B cell (primary cell): ENCODE measurements at regions of chr16 and their contacts with region 1.

Region 1: GRCh38 chr16:55370762-55371482 is 46.9 kb downstream of the IRX6 start:
- DNase-seq: peak; percentile 31
- ATAC-seq: no peak
- H3K4me3 ChIP-seq: no peak overlapping the region
- H3K4me3 Mint-ChIP-seq: peak overlapping the region; percentile 44
- H3K27ac ChIP-seq: no peak overlapping the region
- H3K27ac Mint-ChIP-seq: no peak overlapping the region
- H3K4me1 ChIP-seq: peaks cover 3 to 4% of the 10 kb centered on the region in 2 donors
- H3K4me1 Mint-ChIP-seq: peaks cover 6% of the 10 kb centered on the region
- H3K27me3 ChIP-seq: peaks cover 0 to 15% (median 11%) of the 10 kb centered on the region in 4 experiments
- H3K27me3 Mint-ChIP-seq: peaks cover 40% of the 10 kb centered on the region
- CTCF ChIP-seq: peak; percentile 27

Region 2: GRCh38 chr16:53549970-53550690 is 1820.8 kb before region 1 on chr16:
- CTCF ChIA-PET with region 1: no interaction called
- POLR2A ChIA-PET with region 1: no interaction called
- intact Hi-C with region 1: loop called (anchors 5 kb)
- DNase-seq: peak; percentile 72
- ATAC-seq: peak; percentile 74
- H3K4me3 ChIP-seq: no peak overlapping the region
- H3K4me3 Mint-ChIP-seq: no peak overlapping the region
- H3K27ac ChIP-seq: no peak overlapping the region
- H3K27ac Mint-ChIP-seq: no peak overlapping the region
- H3K4me1 ChIP-seq: peaks cover 9 to 12% of the 10 kb centered on the region in 2 donors
- H3K4me1 Mint-ChIP-seq: peaks cover 15% of the 10 kb centered on the region
- H3K27me3 ChIP-seq: peaks cover 0 to 10% (median 2%) of the 10 kb centered on the region in 4 experiments
- H3K27me3 Mint-ChIP-seq: peaks cover 21% of the 10 kb centered on the region
- CTCF ChIP-seq: peak; percentile 78

Region 3: DNA sequence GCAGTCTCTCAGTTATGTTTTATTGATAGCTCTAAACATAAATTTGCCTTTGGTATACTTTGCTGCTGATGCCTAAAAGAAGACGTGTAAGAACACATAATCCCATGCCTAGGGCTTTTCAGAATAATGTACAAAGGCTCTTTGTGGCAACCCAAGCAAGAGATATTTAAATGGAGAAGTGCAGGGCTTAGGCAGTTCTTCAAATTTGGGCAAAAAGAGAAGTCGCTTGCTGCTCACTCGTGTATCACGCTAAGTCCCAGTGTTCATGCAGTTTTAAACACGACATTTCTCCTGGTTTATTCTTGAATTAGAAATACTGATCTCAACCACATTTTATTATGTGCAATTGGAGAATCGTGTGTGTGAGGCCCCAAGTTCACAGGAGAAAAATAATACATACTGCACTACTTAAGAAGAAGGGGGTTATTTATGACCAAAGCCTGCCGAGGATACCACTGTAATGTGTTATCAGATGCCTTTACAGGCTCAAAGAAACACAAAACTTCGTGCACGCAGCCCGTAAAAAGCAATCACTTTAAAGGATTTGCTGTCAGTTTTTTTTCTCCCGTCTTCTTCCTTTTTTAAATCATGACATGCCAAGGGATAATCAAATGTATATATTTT is 69.4 kb before region 1 on chr16:
- CTCF ChIA-PET with region 1: no interaction called
- POLR2A ChIA-PET with region 1: no interaction called
- intact Hi-C with region 1: no loop called
- DNase-seq: no peak
- ATAC-seq: no peak
- H3K4me3 ChIP-seq: no peak overlapping the region
- H3K4me3 Mint-ChIP-seq: no peak overlapping the region
- H3K27ac ChIP-seq: no peak overlapping the region
- H3K27ac Mint-ChIP-seq: no peak overlapping the region
- H3K4me1 ChIP-seq: no peaks in the 10 kb centered on the region
- H3K4me1 Mint-ChIP-seq: no peaks in the 10 kb centered on the region
- H3K27me3 ChIP-seq: peaks cover 0 to 8% (median 2%) of the 10 kb centered on the region in 4 experiments
- H3K27me3 Mint-ChIP-seq: peaks cover 28% of the 10 kb centered on the region
- CTCF ChIP-seq: no peak

Region 4: DNA sequence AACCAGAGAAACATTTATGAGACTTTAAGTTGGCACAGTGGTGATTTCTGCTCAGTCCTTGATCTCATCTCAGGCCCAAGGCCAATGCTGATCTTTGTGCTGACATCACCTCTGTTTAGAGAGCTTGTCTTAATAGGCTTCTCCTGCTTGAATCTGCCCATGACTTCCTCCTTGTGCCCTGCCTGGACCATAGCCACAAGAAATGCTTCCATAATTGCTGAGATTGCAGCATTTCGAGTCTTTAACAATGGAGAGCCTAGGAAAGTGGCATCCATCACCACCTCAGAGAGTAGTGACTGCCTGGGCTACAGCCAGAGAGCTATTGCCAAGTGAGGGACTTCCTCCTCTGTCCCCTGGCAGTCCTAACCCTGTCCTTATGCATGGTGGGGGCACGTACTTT is 83.0 kb after region 1 on chr16:
- CTCF ChIA-PET with region 1: no interaction called
- POLR2A ChIA-PET with region 1: no interaction called
- intact Hi-C with region 1: no loop called
- DNase-seq: no peak
- ATAC-seq: no peak
- H3K4me3 ChIP-seq: no peak overlapping the region
- H3K4me3 Mint-ChIP-seq: no peak overlapping the region
- H3K27ac ChIP-seq: no peak overlapping the region
- H3K27ac Mint-ChIP-seq: no peak overlapping the region
- H3K4me1 ChIP-seq: no peaks in the 10 kb centered on the region
- H3K4me1 Mint-ChIP-seq: no peaks in the 10 kb centered on the region
- H3K27me3 ChIP-seq: no peaks in the 10 kb centered on the region
- H3K27me3 Mint-ChIP-seq: peaks cover 10% of the 10 kb centered on the region
- CTCF ChIP-seq: no peak